Left cardiac atrium (tissue), 4 donors: ENCODE measurements at regions of chr6 and their contacts with region 1.

Region 1: GRCh38 chr6:18432180-18432579 is 45.0 kb downstream of the RNF144B start:
- DNase-seq: no peak
- ATAC-seq: peak in 1 of 2 donors; percentile 41

Region 2: DNA sequence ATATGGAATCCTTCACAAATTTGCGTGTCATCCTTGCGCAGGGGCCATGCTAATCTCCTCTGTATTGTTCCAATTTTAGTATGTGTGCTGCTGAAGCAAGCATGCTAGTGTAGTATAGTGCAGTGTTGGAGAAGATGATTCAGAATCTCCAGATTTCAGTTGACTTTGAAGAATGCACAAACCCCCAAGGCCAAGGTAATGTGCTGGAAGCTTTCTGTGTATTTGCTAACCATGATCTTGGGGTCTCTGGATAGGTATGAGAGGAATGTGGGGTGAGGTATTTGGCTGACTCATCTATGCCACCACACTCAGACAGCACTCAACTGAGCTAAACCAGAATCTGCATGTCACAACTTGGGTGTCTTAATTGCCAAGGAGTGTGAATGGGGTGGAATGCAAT is 125.2 kb before region 1 on chr6:
- intact Hi-C with region 1: no loop called
- DNase-seq: no peak
- ATAC-seq: peak; percentile 21 to 39

Region 3: DNA sequence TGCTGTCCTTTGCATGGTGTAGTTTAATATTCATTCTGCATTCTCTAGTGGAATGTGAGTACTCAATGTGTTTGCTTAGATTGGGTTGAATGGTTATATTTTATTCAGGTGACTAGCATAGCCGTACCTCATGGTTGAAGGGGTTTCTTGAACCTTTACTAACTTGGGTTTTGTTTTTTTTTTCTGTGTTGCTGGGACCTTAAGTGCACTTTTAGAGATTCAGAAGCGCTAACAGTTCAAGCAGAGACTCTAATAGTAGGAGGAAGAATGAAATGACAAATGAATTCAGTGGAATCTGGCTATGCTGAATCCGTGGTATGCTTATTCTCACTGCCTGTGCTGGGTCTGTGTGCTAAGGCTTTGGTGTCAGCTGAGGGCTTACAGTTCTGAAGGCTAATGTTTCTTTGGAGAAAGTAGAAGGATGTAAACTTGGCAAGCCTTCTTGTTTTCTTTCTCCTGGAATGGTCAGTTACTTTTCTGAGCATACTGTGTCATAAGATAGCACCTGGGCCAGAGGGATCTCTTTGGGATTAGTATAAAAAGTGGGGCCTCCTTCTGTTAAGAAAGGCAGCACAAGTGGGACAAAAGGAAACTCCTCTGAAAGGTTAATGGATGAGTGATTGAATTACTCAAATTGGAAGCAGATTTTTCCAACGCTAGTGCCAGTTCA is 16.4 kb before region 1 on chr6:
- intact Hi-C with region 1: loop called in 1 of 2 experiments (anchors 1 kb)
- DNase-seq: no peak
- ATAC-seq: no peak

Region 4: DNA sequence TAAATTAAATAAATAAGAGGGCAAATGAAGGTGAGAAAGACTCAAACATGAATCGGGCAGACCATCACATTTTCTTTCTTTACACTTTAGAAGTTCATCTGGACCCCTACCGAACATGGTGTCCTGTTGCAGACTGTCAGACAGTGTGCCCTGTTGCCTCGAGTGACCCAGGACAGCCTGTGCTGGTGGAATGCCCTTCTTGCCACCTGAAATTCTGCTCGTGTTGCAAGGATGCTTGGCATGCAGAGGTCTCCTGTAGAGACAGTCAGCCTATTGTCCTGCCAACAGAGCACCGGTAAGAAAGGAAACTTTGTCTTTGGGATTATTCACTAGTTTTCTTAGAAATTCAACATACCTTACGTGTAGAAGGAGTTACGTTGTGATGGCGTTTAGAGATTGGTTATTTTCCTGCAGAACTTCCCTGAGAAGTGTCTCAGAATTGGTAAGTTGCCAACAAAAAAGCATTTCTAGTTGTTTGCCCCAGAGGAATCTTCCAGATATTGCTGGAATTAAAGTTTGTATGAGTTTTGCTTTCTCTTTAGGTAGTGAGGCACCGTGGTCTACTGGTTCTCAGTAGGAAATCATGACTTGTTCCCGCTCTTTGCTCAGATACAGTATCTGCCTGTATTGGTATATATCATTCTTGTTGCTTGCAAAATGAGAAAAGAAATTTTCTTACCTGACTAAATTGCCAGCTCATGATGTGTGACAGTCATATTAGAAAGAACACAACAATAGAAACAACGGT is 25.1 kb after region 1 on chr6:
- intact Hi-C with region 1: loop called in 1 of 2 experiments (anchors 2 kb)
- DNase-seq: no peak
- ATAC-seq: no peak

Region 5: GRCh38 chr6:18477301-18477941 is 45.2 kb after region 1 on chr6:
- intact Hi-C with region 1: no loop called
- DNase-seq: no peak
- ATAC-seq: no peak